ENCODE measurements at regions of chr9 and their contacts with region 1.

Region 1: GRCh38 chr9:136093995-136094881 is 851 bp downstream of the NACC2 start:
- DNase-seq: peak; percentile 53 to 56 (median 54)
- H3K4me3 ChIP-seq: peak overlapping the region; percentile 56 to 90 (median 89)
- H3K4me3 Mint-ChIP-seq: peak overlapping the region; percentile 84 to 85
- H3K27ac ChIP-seq: peak overlapping the region; percentile 60 to 73
- H3K27ac Mint-ChIP-seq: peak overlapping the region in 6 of 7 donors; percentile 68 to 90 (median 78)
- H3K4me1 ChIP-seq: peaks cover 66 to 74% of the 10 kb centered on the region in 2 donors
- H3K4me1 Mint-ChIP-seq: peaks cover 59% of the 10 kb centered on the region
- H3K27me3 ChIP-seq: peaks cover 0 to 10% of the 10 kb centered on the region in 2 donors
- H3K27me3 Mint-ChIP-seq: peaks cover 9 to 15% (median 10%) of the 10 kb centered on the region in 3 donors
- CTCF ChIP-seq: no peak

Region 2: DNA sequence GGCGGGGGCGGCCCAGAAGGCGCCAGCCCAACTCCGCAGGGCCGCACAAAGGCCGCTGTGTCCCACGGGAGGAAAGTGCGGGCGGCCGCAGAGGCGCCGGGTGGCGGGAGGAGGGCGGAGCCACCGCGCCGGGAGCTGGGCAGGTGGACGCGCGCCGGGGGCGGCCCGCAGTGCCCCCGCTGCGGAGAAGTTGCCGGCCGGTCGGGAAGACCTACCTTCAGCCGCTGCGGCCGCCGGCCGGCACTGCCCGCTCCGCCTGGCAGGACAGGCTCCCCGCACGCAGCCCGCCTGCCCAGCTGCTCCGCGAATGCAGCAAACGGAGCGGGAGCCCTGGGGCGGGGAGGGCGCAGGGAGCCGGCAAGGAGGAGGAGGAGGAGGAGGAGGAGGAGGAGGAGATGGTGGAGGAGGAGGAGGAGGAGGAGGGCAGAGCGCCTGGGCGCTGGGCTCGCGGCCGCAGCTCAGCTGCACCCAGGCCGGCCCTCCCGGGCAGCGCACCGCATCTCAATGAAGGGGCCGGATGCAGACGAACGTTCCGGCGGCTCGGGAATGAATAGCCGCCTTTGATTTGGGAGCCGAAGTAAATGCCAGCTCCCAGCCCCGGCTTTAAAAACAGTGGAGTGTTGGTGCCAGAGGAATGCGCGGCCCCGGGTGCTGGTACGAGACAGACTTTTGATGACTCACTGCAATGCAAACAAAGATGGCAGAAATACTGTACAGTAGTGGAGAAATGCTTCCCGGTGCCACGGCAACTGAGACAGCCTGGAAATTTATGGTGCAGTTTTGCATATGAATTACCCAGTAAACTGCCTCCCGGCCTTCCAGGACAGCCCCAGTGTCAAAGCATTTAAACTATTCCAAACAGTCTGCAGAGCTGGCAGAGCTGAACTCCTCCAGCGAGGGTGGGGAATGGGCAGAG is 42.5 kb before region 1 on chr9:
- intact Hi-C with region 1: loop called (anchors 5 kb)
- DNase-seq: peak; percentile 53 to 78 (median 74)
- H3K4me3 ChIP-seq: peak overlapping the region; percentile 66 to 91 (median 86)
- H3K4me3 Mint-ChIP-seq: peak overlapping the region; percentile 80 to 88
- H3K27ac ChIP-seq: peak overlapping the region; percentile 65 to 82
- H3K27ac Mint-ChIP-seq: peak overlapping the region; percentile 89 to 97 (median 93)
- H3K4me1 ChIP-seq: peaks cover 89 to 93% of the 10 kb centered on the region in 2 donors
- H3K4me1 Mint-ChIP-seq: peaks cover 75% of the 10 kb centered on the region
- H3K27me3 ChIP-seq: no peaks in the 10 kb centered on the region
- H3K27me3 Mint-ChIP-seq: peaks cover 0 to 2% (median 0%) of the 10 kb centered on the region in 3 donors
- CTCF ChIP-seq: no peak

Region 3: DNA sequence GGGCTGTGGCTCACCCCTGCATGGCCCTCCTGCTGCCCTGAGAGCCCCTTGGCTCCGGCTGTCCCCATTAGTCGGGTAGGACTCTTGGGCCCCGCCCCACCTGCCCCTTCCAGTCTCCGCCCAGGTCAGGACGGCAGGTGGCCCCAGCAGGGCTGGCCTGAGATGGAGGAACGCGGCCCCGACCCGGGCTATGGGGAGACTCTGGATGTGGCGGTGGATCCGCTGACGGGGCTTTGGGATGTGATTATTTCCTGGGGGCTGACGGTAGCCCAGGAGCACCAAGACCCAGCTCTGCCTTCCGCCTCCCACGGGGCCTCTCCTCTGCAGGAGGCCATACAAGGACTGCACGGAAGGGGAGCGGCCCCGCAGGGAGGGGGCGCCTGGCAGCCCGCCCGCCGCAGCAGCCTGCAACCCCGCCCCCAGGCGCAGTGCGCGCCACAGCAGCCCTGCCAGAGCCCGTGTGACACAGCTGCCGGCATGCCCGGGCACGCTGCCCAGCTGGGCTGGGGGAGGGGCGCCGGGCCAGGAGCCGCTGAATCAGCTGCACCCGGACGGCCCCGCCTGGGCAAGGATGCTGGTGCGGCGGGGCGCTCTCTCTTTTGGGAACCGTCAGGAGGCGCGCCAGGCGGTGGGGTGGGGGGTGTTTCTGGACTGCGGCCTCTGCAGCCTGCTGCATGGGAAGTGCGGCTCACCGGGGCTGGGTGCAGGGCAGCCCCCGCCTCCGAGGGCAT is 15.3 kb after region 1 on chr9:
- intact Hi-C with region 1: loop called in 1 of 2 experiments (anchors 2 kb)
- DNase-seq: peak; percentile 89 to 93 (median 93)
- H3K4me3 ChIP-seq: peak overlapping the region; percentile 17 to 71 (median 29)
- H3K4me3 Mint-ChIP-seq: peak overlapping the region; percentile 68 to 85
- H3K27ac ChIP-seq: peak overlapping the region in 1 of 2 donors; percentile 52
- H3K27ac Mint-ChIP-seq: peak overlapping the region in 4 of 7 donors; percentile 12 to 78 (median 68)
- H3K4me1 ChIP-seq: peaks cover 53 to 73% of the 10 kb centered on the region in 2 donors
- H3K4me1 Mint-ChIP-seq: peaks cover 73% of the 10 kb centered on the region
- H3K27me3 ChIP-seq: peaks cover 0 to 23% of the 10 kb centered on the region in 2 donors
- H3K27me3 Mint-ChIP-seq: peaks cover 26 to 43% (median 36%) of the 10 kb centered on the region in 3 donors
- CTCF ChIP-seq: no peak

Measured in CD14-positive monocyte (primary cell).